Right ventricle myocardium superior (tissue), 1 donor: ENCODE measurements at regions of chr3 and their contacts with region 1.

Region 1: DNA sequence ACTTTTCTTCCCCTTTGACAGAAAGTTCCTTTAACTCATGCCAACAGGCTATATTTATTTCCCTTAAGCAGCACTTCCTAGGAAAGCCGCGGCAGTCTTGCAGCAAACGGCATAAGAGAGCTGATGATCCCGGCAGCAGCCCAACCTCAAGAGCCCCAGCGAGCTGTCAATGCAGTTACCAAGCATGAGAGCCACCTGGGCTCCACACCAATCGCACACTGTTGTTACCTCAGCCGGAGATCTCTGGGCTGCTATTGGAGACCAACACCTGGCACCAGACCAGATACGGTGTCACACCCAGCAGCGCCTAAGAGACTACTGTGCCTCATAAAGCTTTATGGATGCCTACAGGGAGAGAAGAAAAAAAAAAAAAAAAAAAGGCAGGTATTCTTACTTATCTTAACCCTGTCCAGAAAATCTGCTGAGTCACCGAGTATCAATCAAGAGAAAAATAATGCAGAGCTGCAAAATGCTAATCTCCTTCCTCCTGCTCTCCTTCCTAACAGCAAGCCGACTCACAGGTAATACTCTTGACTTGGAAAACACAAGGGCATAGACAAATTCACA is 11.7 kb downstream of the ABCC5 start:
- DNase-seq: peak; percentile 76
- ATAC-seq: peak; percentile 77

Region 2: DNA sequence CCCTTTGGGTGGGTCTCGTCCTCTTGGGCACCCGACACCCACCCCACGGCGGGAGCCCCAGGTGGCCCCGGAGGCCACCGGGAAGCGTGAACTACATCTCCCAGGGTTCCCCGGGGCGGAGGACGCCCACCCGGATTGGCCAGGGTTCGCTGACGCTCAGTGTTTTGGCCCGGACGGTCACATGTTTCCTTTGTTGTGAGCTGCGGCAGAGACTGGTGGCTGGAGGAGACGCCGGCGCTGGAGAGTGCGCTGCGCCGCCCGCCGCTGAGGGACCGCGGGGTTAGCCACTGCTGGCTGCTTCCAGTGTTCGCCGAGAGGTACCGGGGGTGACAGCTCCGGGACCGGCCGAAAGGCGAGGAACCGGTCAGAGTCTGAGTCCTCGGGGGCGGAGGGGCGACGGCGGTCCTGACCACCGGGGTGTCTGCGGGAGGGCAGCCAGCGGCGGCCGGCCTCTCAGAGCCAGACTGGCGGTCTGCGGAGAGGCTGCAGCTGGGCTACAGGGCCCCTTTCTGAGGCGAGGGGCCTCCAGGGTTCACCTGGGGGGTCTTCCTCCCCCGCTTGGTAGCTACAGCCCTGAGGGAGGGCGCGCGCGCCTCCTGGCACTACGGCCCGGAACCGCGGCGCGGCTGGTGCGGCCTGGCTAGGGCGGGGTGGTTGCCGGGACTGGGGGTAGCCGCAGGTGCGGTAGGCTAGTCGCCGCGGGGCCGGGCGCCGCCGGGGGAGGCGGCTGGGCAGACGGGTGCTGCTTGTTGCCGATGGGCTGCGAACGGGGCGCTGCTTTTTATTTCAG is 370.4 kb before region 1 on chr3 and contains the start of gene KLHL24:
- intact Hi-C with region 1: loop called (anchors 5 kb)
- DNase-seq: peak; percentile 95
- ATAC-seq: peak; percentile 89
- total RNA-seq, gene KLHL24: 249 TPM

Region 3: DNA sequence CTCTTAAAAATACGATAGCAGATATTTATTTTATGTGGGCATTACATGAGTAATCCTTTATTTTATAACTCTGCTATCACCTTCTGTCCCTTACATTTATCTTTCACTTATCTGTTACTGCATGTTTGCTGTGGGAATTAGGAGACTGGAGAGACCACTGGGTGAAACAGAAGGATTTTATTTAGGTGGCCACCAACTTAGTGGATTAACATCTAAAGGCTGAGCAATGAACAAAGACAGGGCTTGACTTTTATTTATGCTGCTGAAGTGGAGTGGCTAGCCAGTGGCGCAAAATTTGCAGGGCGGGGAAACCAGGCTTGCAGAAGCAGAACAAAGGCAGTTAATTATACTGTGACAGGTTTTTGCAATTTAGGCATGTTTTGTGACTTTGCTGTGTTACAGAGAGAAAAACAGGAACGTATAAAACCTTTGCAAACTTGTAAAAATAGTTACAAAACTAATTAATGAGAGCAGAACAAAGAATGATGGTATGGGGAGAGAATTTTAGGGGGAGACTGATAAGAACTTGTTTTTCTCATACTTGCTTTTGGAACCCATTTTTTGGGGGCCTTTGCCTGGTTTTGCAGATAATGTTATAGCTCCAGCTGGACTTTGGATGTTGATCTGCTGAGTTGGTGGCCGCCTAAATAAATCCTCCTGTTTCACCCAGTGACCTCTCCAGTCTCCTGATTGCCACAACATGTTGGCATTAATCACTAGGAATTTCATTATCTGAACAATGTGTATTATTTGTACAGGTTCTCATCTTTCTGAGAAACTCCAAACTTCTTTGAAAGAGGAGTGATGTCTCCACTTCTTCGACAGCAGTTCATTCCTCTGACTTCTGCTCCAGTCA is 352.6 kb before region 1 on chr3:
- intact Hi-C with region 1: no loop called
- DNase-seq: no peak
- ATAC-seq: no peak

Region 4: DNA sequence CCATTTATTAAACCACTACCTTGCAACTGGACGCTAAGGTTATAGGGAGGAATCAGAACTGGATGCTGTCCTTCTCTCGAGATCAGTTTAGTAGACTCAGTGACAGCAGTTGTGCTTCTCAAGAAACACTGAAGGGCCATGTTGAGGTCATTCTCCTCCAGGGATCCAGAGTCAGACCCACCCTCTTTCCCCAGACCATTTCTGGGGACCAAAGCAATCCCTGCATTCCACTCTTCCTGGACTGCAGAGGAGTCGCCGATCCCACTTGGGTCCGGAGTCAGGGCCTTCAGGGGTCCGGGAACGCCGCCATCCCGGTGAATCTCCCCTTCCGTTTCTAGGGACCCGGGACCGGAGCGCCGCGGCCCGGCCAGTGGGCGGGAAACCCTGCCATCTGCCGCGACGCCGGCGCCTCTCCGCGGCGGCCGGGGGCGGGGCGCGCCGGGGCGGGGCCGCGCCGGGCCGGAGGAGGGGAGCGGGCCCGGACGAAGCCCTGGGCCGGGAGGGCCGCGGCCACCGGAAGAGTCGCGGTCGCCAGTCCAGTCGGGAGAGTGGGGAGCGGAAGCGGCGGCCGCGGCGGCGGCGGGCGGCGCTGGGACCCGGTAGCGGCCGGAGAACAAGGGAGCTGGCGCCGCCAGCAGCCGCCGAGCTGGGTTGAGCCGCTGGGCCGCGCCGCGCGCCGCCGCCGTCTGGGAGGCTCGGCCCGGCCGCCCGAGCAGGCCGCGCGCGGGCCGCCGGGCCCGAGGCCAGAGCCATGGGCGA is 149.0 kb after region 1 on chr3 and contains the start of gene DVL3:
- intact Hi-C with region 1: no loop called
- DNase-seq: peak; percentile 88
- ATAC-seq: peak; percentile 85
- total RNA-seq, gene DVL3: 60.6 TPM